Activated CD4-positive, alpha-beta memory T cell treated with anti-CD3 and anti-CD28 coated beads for 36 hours (primary cell): ENCODE measurements at regions of chr1 and their contacts with region 1.

Region 1: GRCh38 chr1:172837816-172838680 is 179.1 kb downstream of the FASLG start:
- DNase-seq: peak; percentile 15
- H3K4me3 Mint-ChIP-seq: no peak overlapping the region
- H3K27ac Mint-ChIP-seq: no peak overlapping the region
- H3K4me1 Mint-ChIP-seq: peaks cover 27% of the 10 kb centered on the region
- H3K27me3 Mint-ChIP-seq: peaks cover 33% of the 10 kb centered on the region

Region 2: GRCh38 chr1:172778456-172779455 is 59.3 kb before region 1 on chr1:
- CTCF ChIA-PET with region 1: interaction called, 6 read pairs
- POLR2A ChIA-PET with region 1: interaction called, 5 read pairs
- intact Hi-C with region 1: loop called (anchors 1 kb)
- DNase-seq: no peak
- H3K4me3 Mint-ChIP-seq: no peak overlapping the region
- H3K27ac Mint-ChIP-seq: no peak overlapping the region
- H3K4me1 Mint-ChIP-seq: peaks cover 13% of the 10 kb centered on the region
- H3K27me3 Mint-ChIP-seq: peaks cover 6% of the 10 kb centered on the region

Region 3: GRCh38 chr1:172870901-172871606 is 33.0 kb after region 1 on chr1:
- CTCF ChIA-PET with region 1: no interaction called
- POLR2A ChIA-PET with region 1: no interaction called
- intact Hi-C with region 1: loop called (anchors 1 kb)
- DNase-seq: no peak
- H3K4me3 Mint-ChIP-seq: no peak overlapping the region
- H3K27ac Mint-ChIP-seq: no peak overlapping the region
- H3K4me1 Mint-ChIP-seq: peaks cover 37% of the 10 kb centered on the region
- H3K27me3 Mint-ChIP-seq: peaks cover 13% of the 10 kb centered on the region

Region 4: DNA sequence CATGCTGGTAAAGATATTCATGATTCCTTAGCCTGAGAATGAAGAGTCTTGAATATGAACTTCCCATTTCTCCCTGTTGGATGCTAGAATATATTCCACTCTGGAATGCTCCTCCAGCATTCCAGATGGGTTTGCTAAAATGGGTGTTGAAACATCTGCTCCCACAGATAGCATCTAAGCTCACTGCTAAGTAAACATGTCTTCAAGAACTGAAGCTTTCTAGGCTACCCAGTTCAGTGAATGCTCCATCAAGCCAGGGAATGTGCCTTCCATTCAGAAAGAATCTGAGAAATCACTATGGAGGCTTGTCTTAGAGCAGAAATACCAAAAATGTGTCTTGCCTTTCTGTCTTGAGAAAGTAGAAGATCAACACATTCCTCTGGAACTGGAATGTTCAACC is 131.6 kb after region 1 on chr1:
- CTCF ChIA-PET with region 1: no interaction called
- POLR2A ChIA-PET with region 1: no interaction called
- intact Hi-C with region 1: loop called (anchors 10 kb)
- DNase-seq: no peak
- H3K4me3 Mint-ChIP-seq: no peak overlapping the region
- H3K27ac Mint-ChIP-seq: no peak overlapping the region
- H3K4me1 Mint-ChIP-seq: peaks cover 10% of the 10 kb centered on the region
- H3K27me3 Mint-ChIP-seq: peaks cover 6% of the 10 kb centered on the region

Region 5: DNA sequence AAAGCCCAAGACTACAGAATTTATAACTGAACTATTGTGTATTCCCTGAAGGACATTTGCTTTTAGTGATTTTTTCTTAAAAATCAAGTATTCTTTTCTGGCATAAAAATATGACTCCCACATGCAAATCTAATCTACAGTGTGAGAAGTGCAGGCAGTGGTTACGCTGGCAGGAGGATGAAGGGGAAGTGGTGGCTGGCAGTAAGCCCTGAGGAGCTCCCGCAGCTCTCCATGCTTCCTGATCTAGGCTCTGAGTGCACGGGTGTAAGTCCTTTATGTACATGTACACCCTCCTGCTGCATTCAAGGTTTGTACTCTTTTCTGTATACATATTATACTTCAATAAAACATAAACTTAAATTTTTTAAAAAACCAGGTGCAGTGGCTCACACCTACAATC is 571.6 kb after region 1 on chr1:
- CTCF ChIA-PET with region 1: no interaction called
- POLR2A ChIA-PET with region 1: no interaction called
- intact Hi-C with region 1: loop called (anchors 10 kb)
- DNase-seq: peak; percentile 23
- H3K4me3 Mint-ChIP-seq: no peak overlapping the region
- H3K27ac Mint-ChIP-seq: no peak overlapping the region
- H3K4me1 Mint-ChIP-seq: peaks cover 26% of the 10 kb centered on the region
- H3K27me3 Mint-ChIP-seq: no peaks in the 10 kb centered on the region